GM12878 (cell line): ENCODE measurements at regions of chr16 and their contacts with region 1.

Region 1: DNA sequence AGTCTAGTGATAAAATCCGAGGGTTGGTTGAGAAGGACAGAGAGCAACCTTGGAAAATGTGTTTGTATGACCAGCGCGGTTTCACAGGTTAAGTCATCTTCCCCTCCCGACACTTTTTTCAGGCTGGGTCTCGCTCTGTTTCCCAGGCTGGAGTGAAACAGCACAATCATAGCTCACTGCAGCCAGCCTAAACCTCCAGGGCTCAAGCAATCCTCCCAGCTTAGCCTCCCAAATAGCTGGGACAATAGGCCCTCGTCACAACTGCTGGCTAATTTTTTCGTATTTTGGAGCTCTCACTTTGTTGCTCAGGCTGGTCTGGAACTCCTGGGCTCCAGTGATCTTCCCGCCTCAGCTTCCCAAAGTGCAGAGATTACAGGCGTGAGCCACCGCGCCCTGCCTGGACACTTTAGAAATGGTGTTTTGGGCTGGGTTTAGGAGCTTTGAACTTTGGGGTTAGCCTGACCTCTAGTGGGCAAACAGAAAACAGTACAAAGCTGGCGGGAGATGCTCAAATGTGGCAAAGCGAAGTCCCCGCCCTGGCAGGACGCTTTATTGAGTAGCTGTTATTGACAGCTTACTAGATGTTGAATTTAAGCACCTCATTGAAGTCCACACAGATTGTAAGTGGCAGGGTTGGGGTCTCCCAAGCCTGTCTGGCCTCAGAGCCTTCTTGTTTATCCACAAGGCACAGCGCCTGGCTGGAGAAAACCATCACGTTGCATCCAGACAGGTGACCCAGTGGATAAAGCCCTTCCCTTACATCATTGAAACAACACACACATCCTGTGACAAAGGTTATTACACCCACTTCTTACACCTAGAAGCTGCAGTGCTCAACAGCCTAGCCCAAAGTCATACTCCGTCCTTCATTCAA is 34.7 kb upstream of the RBBP6 start:
- DNase-seq: peak; percentile 17
- ATAC-seq: peak; percentile 98
- H3K4me3 ChIP-seq: no peak overlapping the region
- H3K27ac ChIP-seq: no peak overlapping the region
- H3K4me1 ChIP-seq: no peaks in the 10 kb centered on the region
- H3K27me3 ChIP-seq: no peaks in the 10 kb centered on the region
- CTCF ChIP-seq: peak; percentile 76 to 87 (median 79)
- EP300 ChIP-seq: no peak
- POLR2A ChIP-seq: no peak
- RAD21 ChIP-seq: peak; percentile 91

Region 2: GRCh38 chr16:24041826-24042631 is 462.7 kb before region 1 on chr16:
- CTCF ChIA-PET with region 1: interaction called, 22 read pairs
- POLR2A ChIA-PET with region 1: no interaction called
- RAD21 ChIA-PET with region 1: interaction called, 3 read pairs
- SMC1A ChIA-PET with region 1: interaction called, 3 read pairs
- in situ Hi-C with region 1: loop called (anchors 5 kb)
- intact Hi-C with region 1: loop called (anchors 2 kb)
- DNase-seq: peak; percentile 45
- ATAC-seq: peak; percentile 98
- H3K4me3 ChIP-seq: no peak overlapping the region
- H3K27ac ChIP-seq: no peak overlapping the region
- H3K4me1 ChIP-seq: no peaks in the 10 kb centered on the region
- H3K27me3 ChIP-seq: no peaks in the 10 kb centered on the region
- CTCF ChIP-seq: peak; percentile 64 to 80 (median 72)
- EP300 ChIP-seq: no peak
- POLR2A ChIP-seq: no peak
- RAD21 ChIP-seq: peak; percentile 77

Region 3: DNA sequence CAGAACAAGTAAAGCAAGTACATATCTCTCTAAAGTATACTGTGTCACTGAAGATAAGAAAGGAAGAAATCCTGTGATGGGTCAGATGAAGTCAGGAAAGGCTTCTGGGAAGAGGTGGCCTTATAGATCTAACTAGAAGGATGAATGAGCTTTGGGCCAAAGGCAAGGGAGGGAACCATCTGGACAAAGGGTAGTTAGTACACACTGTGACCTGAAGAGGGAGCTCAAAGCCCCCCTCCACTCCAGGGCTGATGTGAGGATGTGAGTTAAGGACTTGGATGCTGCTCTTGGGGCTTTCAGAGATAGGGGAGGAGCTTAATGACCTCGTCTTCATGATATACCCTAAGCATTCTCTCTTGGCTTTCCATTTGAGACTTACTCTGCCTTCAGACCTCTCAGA is 433.9 kb before region 1 on chr16:
- CTCF ChIA-PET with region 1: interaction called, 10 read pairs
- POLR2A ChIA-PET with region 1: no interaction called
- RAD21 ChIA-PET with region 1: interaction called, 12 read pairs
- SMC1A ChIA-PET with region 1: no interaction called
- in situ Hi-C with region 1: no loop called
- intact Hi-C with region 1: loop called (anchors 10 kb)
- DNase-seq: peak; percentile 9
- ATAC-seq: peak; percentile 82
- H3K4me3 ChIP-seq: no peak overlapping the region
- H3K27ac ChIP-seq: no peak overlapping the region
- H3K4me1 ChIP-seq: peaks cover 17% of the 10 kb centered on the region
- H3K27me3 ChIP-seq: no peaks in the 10 kb centered on the region
- CTCF ChIP-seq: peak; percentile 60 to 71 (median 62)
- EP300 ChIP-seq: no peak
- POLR2A ChIP-seq: no peak
- RAD21 ChIP-seq: peak; percentile 63

Region 4: DNA sequence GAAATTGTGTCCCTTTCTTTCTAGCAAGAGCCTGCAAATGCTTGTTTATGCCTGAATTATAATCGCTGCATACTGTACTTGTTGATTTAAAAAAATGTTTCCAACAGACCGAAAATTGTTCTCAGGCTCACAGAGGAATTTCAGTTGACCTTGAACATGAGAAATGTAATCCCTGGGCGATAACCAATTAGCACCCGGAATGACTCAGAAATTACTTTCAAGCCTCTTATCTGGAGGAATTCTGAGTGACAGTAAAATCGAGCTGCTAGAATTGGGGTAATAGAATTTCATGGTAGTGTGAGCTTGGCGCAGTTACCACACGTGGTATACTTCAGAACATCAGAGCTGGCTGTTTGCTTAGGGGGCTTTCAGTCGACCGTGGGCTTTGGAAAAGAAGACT is 387.7 kb before region 1 on chr16:
- CTCF ChIA-PET with region 1: no interaction called
- POLR2A ChIA-PET with region 1: no interaction called
- RAD21 ChIA-PET with region 1: no interaction called
- SMC1A ChIA-PET with region 1: no interaction called
- in situ Hi-C with region 1: no loop called
- intact Hi-C with region 1: no loop called
- DNase-seq: no peak
- ATAC-seq: no peak
- H3K4me3 ChIP-seq: no peak overlapping the region
- H3K27ac ChIP-seq: no peak overlapping the region
- H3K4me1 ChIP-seq: no peaks in the 10 kb centered on the region
- H3K27me3 ChIP-seq: no peaks in the 10 kb centered on the region
- CTCF ChIP-seq: no peak
- EP300 ChIP-seq: no peak
- POLR2A ChIP-seq: no peak
- RAD21 ChIP-seq: no peak

Region 5: GRCh38 chr16:24235806-24236205 is 268.9 kb before region 1 on chr16:
- CTCF ChIA-PET with region 1: no interaction called
- POLR2A ChIA-PET with region 1: no interaction called
- RAD21 ChIA-PET with region 1: no interaction called
- SMC1A ChIA-PET with region 1: no interaction called
- in situ Hi-C with region 1: no loop called
- intact Hi-C with region 1: no loop called
- DNase-seq: no peak
- ATAC-seq: no peak
- H3K4me3 ChIP-seq: no peak overlapping the region
- H3K27ac ChIP-seq: no peak overlapping the region
- H3K4me1 ChIP-seq: no peaks in the 10 kb centered on the region
- H3K27me3 ChIP-seq: no peaks in the 10 kb centered on the region
- CTCF ChIP-seq: no peak
- EP300 ChIP-seq: no peak
- POLR2A ChIP-seq: no peak
- RAD21 ChIP-seq: no peak

Region 6: DNA sequence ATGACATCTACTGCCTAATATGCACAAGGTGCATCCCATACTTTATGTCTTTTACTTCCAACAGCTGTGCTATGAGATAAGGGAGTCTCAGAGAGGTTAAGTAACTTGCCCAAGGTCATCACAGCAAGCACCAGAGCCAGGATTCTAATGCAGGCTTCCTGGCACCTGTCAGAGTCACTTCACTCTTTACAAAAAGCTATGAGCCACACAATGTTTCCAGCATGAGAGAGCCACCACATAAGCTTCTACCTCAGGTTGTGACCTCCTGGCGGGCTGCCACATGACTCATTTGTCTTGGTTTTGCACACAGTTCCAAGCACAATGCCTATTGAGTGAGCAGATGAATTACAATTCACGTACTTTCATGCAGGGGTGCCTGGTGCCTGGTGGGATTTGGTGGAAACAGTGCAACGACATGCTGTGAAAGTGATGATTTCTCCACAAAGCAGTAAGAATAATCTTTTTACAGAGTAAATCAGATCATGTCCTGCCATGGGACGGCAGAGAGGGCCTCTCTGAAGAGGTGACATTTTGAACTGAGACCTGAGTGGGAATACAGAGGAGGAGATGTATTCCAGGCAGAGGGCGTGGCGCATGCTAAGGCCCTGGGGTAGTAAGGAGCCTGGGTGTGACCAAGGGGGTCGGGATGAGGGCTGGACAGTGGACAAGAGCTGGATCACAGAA is 195.3 kb before region 1 on chr16:
- CTCF ChIA-PET with region 1: interaction called, 4 read pairs
- POLR2A ChIA-PET with region 1: no interaction called
- RAD21 ChIA-PET with region 1: no interaction called
- SMC1A ChIA-PET with region 1: no interaction called
- in situ Hi-C with region 1: no loop called
- intact Hi-C with region 1: loop called (anchors 5 kb)
- DNase-seq: no peak
- ATAC-seq: no peak
- H3K4me3 ChIP-seq: no peak overlapping the region
- H3K27ac ChIP-seq: no peak overlapping the region
- H3K4me1 ChIP-seq: no peaks in the 10 kb centered on the region
- H3K27me3 ChIP-seq: peaks cover 0 to 4% of the 10 kb centered on the region in 2 experiments; a peak in 2 of 4 replicates
- CTCF ChIP-seq: no peak
- EP300 ChIP-seq: no peak
- POLR2A ChIP-seq: no peak
- RAD21 ChIP-seq: no peak

Region 7: GRCh38 chr16:24409049-24409448 is 95.7 kb before region 1 on chr16:
- CTCF ChIA-PET with region 1: interaction called, 8 read pairs
- POLR2A ChIA-PET with region 1: no interaction called
- RAD21 ChIA-PET with region 1: no interaction called
- SMC1A ChIA-PET with region 1: interaction called, 4 read pairs
- in situ Hi-C with region 1: loop called (anchors 5 kb)
- intact Hi-C with region 1: loop called (anchors 5 kb)
- DNase-seq: no peak
- ATAC-seq: peak; percentile 44; the same call in 1 of the 3 replicates
- H3K4me3 ChIP-seq: no peak overlapping the region
- H3K27ac ChIP-seq: no peak overlapping the region
- H3K4me1 ChIP-seq: no peaks in the 10 kb centered on the region
- H3K27me3 ChIP-seq: no peaks in the 10 kb centered on the region
- CTCF ChIP-seq: peak in 2 of 3 experiments; percentile 32 to 34; a peak in 3 of 6 replicates
- EP300 ChIP-seq: no peak
- POLR2A ChIP-seq: no peak
- RAD21 ChIP-seq: 0 out of 2 replicates have a peak, but pooled peaks have one; percentile 22

Region 8: DNA sequence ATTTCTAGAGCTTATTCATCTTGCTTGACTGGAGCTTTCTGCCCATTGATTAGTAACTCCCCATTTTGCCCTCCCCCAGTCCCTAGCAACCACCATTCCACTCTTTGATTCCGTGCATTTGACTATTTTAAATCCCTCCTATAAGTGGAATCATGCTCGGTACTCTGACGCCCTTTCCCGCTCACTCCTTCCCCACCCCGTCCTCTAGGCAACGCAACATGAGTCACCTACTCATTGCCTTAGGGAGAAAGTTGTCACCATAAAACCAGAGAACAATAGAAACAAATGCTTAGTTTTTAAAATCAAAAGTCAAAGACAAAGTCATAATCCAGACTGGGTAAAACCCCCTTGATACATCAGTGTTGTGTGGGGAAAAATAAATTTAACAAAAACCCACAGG is 10.8 kb before region 1 on chr16:
- CTCF ChIA-PET with region 1: interaction called, 14 read pairs
- POLR2A ChIA-PET with region 1: no interaction called
- RAD21 ChIA-PET with region 1: no interaction called
- SMC1A ChIA-PET with region 1: interaction called, 4 read pairs
- in situ Hi-C with region 1: no loop called
- intact Hi-C with region 1: no loop called
- DNase-seq: no peak
- ATAC-seq: no peak
- H3K4me3 ChIP-seq: no peak overlapping the region
- H3K27ac ChIP-seq: no peak overlapping the region
- H3K4me1 ChIP-seq: no peaks in the 10 kb centered on the region
- H3K27me3 ChIP-seq: no peaks in the 10 kb centered on the region; a peak in 1 of 4 replicates
- CTCF ChIP-seq: no peak
- EP300 ChIP-seq: no peak
- POLR2A ChIP-seq: no peak
- RAD21 ChIP-seq: no peak

Region 9: DNA sequence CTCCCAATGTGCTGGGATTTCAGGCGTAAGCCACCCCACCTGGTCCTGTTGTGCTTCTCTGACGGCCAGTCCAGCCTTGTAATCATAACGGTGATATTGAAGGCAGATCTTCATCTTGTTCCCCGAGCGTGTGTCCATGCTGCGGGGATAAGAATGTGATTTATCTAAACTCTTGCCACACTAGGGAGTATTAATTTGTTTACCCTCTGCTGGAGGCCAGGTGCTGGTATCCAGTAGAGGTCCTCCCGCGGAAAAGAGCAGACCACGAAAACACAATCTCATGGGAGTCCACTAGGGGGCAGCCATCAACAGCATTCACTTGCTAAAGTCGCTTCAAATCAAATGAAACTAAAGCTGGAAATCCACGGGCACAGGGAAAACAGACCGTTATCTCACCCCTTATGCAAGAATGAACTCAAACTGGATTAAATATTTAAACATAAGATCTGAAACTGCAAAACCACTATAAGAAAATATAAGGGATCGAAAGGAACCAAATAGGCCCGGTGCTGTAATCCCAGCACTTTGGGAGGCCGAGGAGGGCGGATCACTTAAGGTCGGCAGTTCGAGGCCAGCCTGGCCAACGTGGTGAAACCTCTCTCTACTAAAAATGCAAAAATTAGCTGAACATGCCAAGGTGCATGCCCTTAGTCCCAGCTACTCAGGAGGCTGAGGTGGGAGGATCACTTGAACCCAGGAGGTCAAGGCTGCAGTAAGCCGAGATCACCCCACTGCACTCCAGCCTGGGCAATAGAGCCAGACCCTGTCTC is 12.4 kb after region 1 on chr16:
- CTCF ChIA-PET with region 1: interaction called, 26 read pairs
- POLR2A ChIA-PET with region 1: no interaction called
- RAD21 ChIA-PET with region 1: interaction called, 4 read pairs
- SMC1A ChIA-PET with region 1: interaction called, 4 read pairs
- in situ Hi-C with region 1: no loop called
- intact Hi-C with region 1: no loop called
- DNase-seq: peak; percentile 38
- ATAC-seq: peak; percentile 90
- H3K4me3 ChIP-seq: no peak overlapping the region
- H3K27ac ChIP-seq: no peak overlapping the region
- H3K4me1 ChIP-seq: no peaks in the 10 kb centered on the region
- H3K27me3 ChIP-seq: no peaks in the 10 kb centered on the region; a peak in 1 of 4 replicates
- CTCF ChIP-seq: peak; percentile 90 to 92 (median 91)
- EP300 ChIP-seq: no peak
- POLR2A ChIP-seq: no peak
- RAD21 ChIP-seq: peak; percentile 91